ENCODE measurements at regions of chr5 and their contacts with region 1.

Region 1: DNA sequence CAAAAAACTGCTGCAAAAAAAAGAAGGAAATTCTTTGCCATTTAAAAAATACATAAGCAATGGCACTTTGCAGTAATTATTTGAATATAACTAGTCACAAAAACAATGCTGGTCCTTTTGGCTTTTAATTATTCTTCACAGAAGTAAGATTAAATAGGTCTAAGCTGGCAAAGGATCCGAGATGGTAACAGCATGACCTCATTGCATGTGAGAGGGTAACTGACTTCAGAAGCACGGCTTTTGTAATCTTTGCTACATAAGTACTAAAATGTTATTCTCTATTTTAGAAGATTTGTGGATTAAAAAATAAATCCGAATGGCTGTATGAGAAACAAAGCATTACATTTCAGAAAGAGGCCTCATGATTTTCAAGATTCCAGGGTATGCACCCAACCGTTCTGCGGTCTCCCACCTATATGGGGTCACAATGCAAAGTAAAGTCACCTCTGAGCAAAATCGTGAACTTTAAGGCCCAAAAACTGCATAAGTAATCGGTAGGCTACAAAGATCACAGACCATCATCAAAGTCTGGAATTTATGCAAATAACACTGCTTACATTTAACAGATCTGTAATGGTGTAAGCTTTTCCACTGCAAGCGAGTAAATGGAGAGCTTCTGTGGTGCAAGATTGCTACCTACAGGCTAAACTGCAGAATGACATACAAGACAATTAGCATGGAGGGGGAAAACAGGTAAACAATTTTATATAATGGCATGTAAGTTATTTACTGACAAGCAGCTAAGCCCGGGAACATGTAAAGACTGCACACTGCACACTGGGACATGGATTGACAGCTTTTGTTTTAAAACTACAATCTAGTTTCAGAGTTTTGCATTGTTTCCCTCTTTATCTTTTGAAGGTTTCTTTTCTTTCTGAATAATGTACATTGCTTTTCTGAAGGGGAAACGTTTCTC is 231.6 kb downstream of the SLF1 start:
- DNase-seq: peak; percentile 32
- H3K4me3 Mint-ChIP-seq: no peak overlapping the region
- H3K27ac Mint-ChIP-seq: no peak overlapping the region
- H3K4me1 Mint-ChIP-seq: peaks cover 24% of the 10 kb centered on the region
- H3K27me3 Mint-ChIP-seq: no peaks in the 10 kb centered on the region

Region 2: GRCh38 chr5:93607367-93608258 is 1242.5 kb before region 1 on chr5:
- intact Hi-C with region 1: loop called (anchors 1 kb)
- DNase-seq: no peak
- H3K4me3 Mint-ChIP-seq: no peak overlapping the region
- H3K27ac Mint-ChIP-seq: no peak overlapping the region
- H3K4me1 Mint-ChIP-seq: peaks cover 10% of the 10 kb centered on the region
- H3K27me3 Mint-ChIP-seq: peaks cover 85% of the 10 kb centered on the region

Region 3: GRCh38 chr5:93800988-93801811 is 1048.9 kb before region 1 on chr5:
- intact Hi-C with region 1: loop called (anchors 5 kb)
- DNase-seq: no peak
- H3K4me3 Mint-ChIP-seq: no peak overlapping the region
- H3K27ac Mint-ChIP-seq: no peak overlapping the region
- H3K4me1 Mint-ChIP-seq: peaks cover 4% of the 10 kb centered on the region
- H3K27me3 Mint-ChIP-seq: peaks cover 2% of the 10 kb centered on the region

Region 4: DNA sequence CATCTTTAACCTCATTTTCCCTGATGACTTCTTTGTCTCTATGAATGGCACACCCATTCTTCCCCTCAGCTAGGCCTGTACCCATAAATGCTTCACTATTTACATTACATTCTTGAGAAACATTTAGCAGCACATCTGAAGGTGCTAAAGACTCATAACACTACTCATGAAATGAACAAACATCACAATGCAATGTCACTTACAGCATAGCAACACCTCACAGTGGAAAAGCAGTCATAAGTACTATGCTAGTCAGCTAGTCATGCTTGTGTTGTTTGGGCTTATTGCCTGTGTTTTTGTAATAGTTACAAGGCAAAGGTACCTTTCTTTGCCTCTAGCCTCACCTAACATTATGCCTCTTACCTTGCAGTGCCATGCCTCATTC is 460.6 kb before region 1 on chr5:
- intact Hi-C with region 1: loop called (anchors 1 kb)
- DNase-seq: no peak
- H3K4me3 Mint-ChIP-seq: no peak overlapping the region
- H3K27ac Mint-ChIP-seq: peak overlapping the region; percentile 92
- H3K4me1 Mint-ChIP-seq: peaks cover 16% of the 10 kb centered on the region
- H3K27me3 Mint-ChIP-seq: no peaks in the 10 kb centered on the region

Region 5: GRCh38 chr5:94618493-94619328 is 231.4 kb before region 1 on chr5 and contains the starts of genes KIAA0825 and SLF1:
- intact Hi-C with region 1: loop called (anchors 1 kb)
- DNase-seq: peak; percentile 83
- H3K4me3 Mint-ChIP-seq: peak within 1 kb of the TSS; percentile 89
- H3K27ac Mint-ChIP-seq: peak within 1 kb of the TSS; percentile 96
- H3K4me1 Mint-ChIP-seq: peaks cover 55% of the 10 kb centered on the region
- H3K27me3 Mint-ChIP-seq: no peaks in the 10 kb centered on the region
- total RNA-seq, gene KIAA0825: 0.36 and 0.47 TPM in 2 replicates
- total RNA-seq, gene SLF1: 15.4 and 17.9 TPM in 2 replicates

Region 6: DNA sequence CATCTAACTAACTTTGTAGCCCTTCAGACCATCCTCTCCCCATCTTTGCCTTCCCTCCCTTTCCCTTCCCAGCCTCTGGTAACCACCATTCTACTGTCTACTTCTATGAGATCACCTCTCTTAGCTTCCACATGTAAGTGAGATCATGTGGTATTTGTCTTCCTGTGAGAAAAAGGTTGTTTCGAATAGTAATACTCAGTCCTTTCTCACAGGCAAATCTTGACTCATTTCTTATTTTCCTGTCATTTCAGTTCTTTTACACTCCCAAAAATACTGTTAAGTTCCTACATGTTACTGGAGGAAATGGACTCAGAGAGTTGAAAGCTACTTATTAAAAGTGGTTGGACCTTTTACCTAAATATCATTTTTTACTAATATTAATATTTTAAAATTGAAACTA is 149.5 kb before region 1 on chr5:
- intact Hi-C with region 1: loop called (anchors 2 kb)
- DNase-seq: no peak
- H3K4me3 Mint-ChIP-seq: no peak overlapping the region
- H3K27ac Mint-ChIP-seq: peak overlapping the region; percentile 61
- H3K4me1 Mint-ChIP-seq: peaks cover 15% of the 10 kb centered on the region
- H3K27me3 Mint-ChIP-seq: no peaks in the 10 kb centered on the region

Region 7: GRCh38 chr5:94793113-94793815 is 56.8 kb before region 1 on chr5:
- intact Hi-C with region 1: loop called (anchors 1 kb)
- DNase-seq: peak; percentile 47
- H3K4me3 Mint-ChIP-seq: peak overlapping the region; percentile 64
- H3K27ac Mint-ChIP-seq: peak overlapping the region; percentile 94
- H3K4me1 Mint-ChIP-seq: peaks cover 67% of the 10 kb centered on the region
- H3K27me3 Mint-ChIP-seq: no peaks in the 10 kb centered on the region

Region 8: GRCh38 chr5:94807985-94808384 is 42.1 kb before region 1 on chr5:
- intact Hi-C with region 1: no loop called
- DNase-seq: no peak
- H3K4me3 Mint-ChIP-seq: no peak overlapping the region
- H3K27ac Mint-ChIP-seq: no peak overlapping the region
- H3K4me1 Mint-ChIP-seq: no peaks in the 10 kb centered on the region
- H3K27me3 Mint-ChIP-seq: peaks cover 33% of the 10 kb centered on the region

Region 9: GRCh38 chr5:96692441-96692840 is 1842.4 kb after region 1 on chr5:
- intact Hi-C with region 1: no loop called
- DNase-seq: no peak
- H3K4me3 Mint-ChIP-seq: no peak overlapping the region
- H3K27ac Mint-ChIP-seq: no peak overlapping the region
- H3K4me1 Mint-ChIP-seq: no peaks in the 10 kb centered on the region
- H3K27me3 Mint-ChIP-seq: no peaks in the 10 kb centered on the region